Common myeloid progenitor, CD34-positive (primary cell): ENCODE measurements at regions of chr7 and their contacts with region 1.

Region 1: GRCh38 chr7:106153891-106154449 is 41.9 kb upstream of the SYPL1 start:
- DNase-seq: peak; percentile 79 to 87 (median 85)
- H3K4me3 ChIP-seq: peak overlapping the region in 4 of 7 experiments; percentile 30 to 74 (median 60)
- H3K27ac ChIP-seq: no peak overlapping the region
- H3K4me1 ChIP-seq: peaks cover 0 to 19% (median 15%) of the 10 kb centered on the region in 4 experiments
- H3K27me3 ChIP-seq: no peaks in the 10 kb centered on the region

Region 2: GRCh38 chr7:105924945-105925344 is 229.0 kb before region 1 on chr7:
- CTCF ChIA-PET with region 1: no interaction called
- POLR2A ChIA-PET with region 1: no interaction called
- DNase-seq: no peak
- H3K4me3 ChIP-seq: no peak overlapping the region
- H3K27ac ChIP-seq: no peak overlapping the region
- H3K4me1 ChIP-seq: no peaks in the 10 kb centered on the region
- H3K27me3 ChIP-seq: peaks cover 0 to 2% (median 0%) of the 10 kb centered on the region in 5 experiments

Region 3: DNA sequence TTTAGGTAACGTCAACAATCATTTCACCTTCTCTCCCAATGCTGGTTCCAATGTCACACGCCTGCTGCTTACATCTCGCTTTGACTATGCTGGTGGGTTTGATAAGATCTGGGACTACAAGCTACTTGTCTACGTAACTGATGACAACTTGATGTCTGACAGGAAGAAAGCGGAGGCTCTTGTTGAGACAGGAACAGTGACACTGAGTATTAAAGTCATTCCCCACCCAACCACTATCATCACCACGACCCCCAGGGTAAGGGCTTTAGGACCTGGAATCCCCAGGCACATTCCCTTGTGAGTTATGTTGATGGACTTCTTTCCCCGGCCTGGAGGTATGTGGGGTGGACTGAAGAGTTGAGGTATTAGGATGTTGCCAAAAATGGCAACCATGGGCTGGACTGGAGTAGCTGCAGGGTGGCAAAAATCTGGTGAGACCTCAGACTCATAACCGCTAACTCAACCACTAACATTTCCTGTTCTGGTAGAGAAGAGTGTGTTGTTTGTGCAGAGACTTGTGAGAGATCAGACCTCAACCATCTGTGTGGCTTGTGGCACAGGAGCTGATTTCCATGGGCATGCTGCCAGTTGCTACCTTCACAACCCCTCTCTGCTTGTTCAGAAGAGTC is 131.7 kb before region 1 on chr7:
- CTCF ChIA-PET with region 1: no interaction called
- POLR2A ChIA-PET with region 1: no interaction called
- DNase-seq: peak; percentile 61 to 87 (median 85)
- H3K4me3 ChIP-seq: no peak overlapping the region
- H3K27ac ChIP-seq: no peak overlapping the region
- H3K4me1 ChIP-seq: peaks cover 11 to 19% (median 12%) of the 10 kb centered on the region in 4 experiments
- H3K27me3 ChIP-seq: peaks cover 0 to 98% (median 53%) of the 10 kb centered on the region in 5 experiments

Region 4: GRCh38 chr7:106056513-106057203 is 97.3 kb before region 1 on chr7:
- CTCF ChIA-PET with region 1: interaction called, 176 read pairs
- POLR2A ChIA-PET with region 1: interaction called, 3 read pairs
- DNase-seq: peak; percentile 72 to 85 (median 83)
- H3K4me3 ChIP-seq: no peak overlapping the region
- H3K27ac ChIP-seq: no peak overlapping the region
- H3K4me1 ChIP-seq: peaks cover 7 to 42% (median 27%) of the 10 kb centered on the region in 4 experiments
- H3K27me3 ChIP-seq: no peaks in the 10 kb centered on the region

Region 5: GRCh38 chr7:106080300-106080987 is 73.5 kb before region 1 on chr7:
- CTCF ChIA-PET with region 1: interaction called, 10 read pairs
- POLR2A ChIA-PET with region 1: no interaction called
- DNase-seq: no peak
- H3K4me3 ChIP-seq: no peak overlapping the region
- H3K27ac ChIP-seq: no peak overlapping the region
- H3K4me1 ChIP-seq: peaks cover 8 to 41% (median 22%) of the 10 kb centered on the region in 4 experiments
- H3K27me3 ChIP-seq: no peaks in the 10 kb centered on the region

Region 6: GRCh38 chr7:106101726-106102125 is 52.2 kb before region 1 on chr7:
- CTCF ChIA-PET with region 1: interaction called, 24 read pairs
- POLR2A ChIA-PET with region 1: no interaction called
- DNase-seq: no peak
- H3K4me3 ChIP-seq: no peak overlapping the region
- H3K27ac ChIP-seq: peak overlapping the region in 1 of 2 experiments; percentile 37
- H3K4me1 ChIP-seq: peaks cover 7 to 50% (median 17%) of the 10 kb centered on the region in 4 experiments
- H3K27me3 ChIP-seq: no peaks in the 10 kb centered on the region

Region 7: GRCh38 chr7:106139265-106140251 is 14.4 kb before region 1 on chr7:
- CTCF ChIA-PET with region 1: interaction called, 23 read pairs
- POLR2A ChIA-PET with region 1: no interaction called
- DNase-seq: no peak
- H3K4me3 ChIP-seq: no peak overlapping the region
- H3K27ac ChIP-seq: no peak overlapping the region
- H3K4me1 ChIP-seq: peaks cover 0 to 7% (median 0%) of the 10 kb centered on the region in 4 experiments
- H3K27me3 ChIP-seq: no peaks in the 10 kb centered on the region

Region 8: DNA sequence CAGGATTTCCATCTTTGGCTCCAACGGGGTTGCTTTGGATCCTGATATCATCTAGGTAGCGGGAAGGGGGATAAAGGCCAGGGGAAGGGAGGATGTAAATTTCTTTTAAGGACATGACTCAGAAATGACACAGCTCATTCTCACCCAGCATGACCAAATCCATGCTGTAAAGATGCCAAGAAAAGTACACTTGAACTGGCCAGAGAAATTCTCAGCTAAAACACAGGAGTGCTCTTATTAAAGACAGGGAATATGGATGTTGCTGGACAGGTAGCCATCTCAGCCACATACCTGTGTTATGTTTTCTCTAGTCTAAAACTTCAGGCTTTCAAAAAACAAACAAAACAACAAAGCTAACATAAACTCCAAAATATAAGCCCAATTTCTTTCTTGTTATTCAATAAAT is 62.5 kb after region 1 on chr7:
- CTCF ChIA-PET with region 1: no interaction called
- POLR2A ChIA-PET with region 1: no interaction called
- DNase-seq: peak; percentile 9 to 39 (median 36)
- H3K4me3 ChIP-seq: no peak overlapping the region
- H3K27ac ChIP-seq: peak overlapping the region in 1 of 2 experiments; percentile 61
- H3K4me1 ChIP-seq: no peaks in the 10 kb centered on the region
- H3K27me3 ChIP-seq: peaks cover 0 to 4% (median 0%) of the 10 kb centered on the region in 5 experiments

Region 9: DNA sequence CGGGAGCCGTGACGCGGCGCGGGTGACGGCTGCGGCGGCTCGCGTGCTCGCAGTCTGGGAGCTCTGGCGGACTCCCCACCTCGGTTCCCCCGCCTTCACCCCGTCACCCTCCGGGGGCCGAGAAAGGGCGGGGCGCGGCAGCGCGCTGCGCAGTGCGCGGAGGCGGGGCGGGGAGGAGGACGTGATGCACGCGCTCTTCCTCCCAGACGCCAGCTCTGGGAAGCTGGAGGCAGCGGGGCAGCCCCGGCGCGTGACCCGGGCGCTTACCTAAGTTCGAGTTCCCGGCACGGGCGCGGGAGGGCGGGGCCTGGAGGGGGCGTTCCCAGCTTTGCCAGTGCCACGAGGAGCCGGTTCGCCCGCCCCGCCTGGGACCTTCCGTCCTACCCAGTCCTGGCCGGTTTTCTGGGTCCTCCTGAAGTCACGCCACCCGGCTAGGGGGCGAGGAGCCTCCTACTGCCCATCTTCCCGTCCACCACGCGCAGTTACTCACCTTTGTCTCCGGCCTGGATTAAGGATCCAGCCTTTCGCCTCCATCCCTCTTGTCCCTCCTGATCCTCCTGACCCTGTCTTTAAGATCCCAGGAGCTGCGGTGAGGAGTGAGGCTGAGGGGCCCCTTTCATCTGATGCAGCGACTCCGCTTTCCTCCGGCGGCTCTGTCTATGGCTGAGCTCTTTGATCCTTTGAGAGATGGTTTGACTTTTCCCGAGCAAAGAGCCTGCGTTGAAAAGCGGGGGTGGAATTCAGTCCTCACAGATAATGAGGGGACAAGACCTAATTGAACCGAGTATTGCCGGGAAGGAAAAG is 131.3 kb after region 1 on chr7:
- CTCF ChIA-PET with region 1: no interaction called
- POLR2A ChIA-PET with region 1: no interaction called
- DNase-seq: peak; percentile 98 to 99 (median 99)
- H3K4me3 ChIP-seq: peak overlapping the region; percentile 80 to 97 (median 92)
- H3K27ac ChIP-seq: peak overlapping the region; percentile 79 to 93
- H3K4me1 ChIP-seq: peaks cover 0 to 35% (median 14%) of the 10 kb centered on the region in 4 experiments
- H3K27me3 ChIP-seq: no peaks in the 10 kb centered on the region